Activated T-helper 1 cell treated with anti-CD3 and anti-CD28 coated beads, Interleukin-12 subunit alpha, Interleukin-12 subunit beta, Interleukin-2, Interleukin-4 antibody, amounts not matched to agents 30 ng/mL and 10 ng/mL and 1 ng/mL, durations not matched to agents 14 hours and 24 hours and 36 hours (primary cell): ENCODE measurements at regions of chr7 and their contacts with region 1.

Region 1: DNA sequence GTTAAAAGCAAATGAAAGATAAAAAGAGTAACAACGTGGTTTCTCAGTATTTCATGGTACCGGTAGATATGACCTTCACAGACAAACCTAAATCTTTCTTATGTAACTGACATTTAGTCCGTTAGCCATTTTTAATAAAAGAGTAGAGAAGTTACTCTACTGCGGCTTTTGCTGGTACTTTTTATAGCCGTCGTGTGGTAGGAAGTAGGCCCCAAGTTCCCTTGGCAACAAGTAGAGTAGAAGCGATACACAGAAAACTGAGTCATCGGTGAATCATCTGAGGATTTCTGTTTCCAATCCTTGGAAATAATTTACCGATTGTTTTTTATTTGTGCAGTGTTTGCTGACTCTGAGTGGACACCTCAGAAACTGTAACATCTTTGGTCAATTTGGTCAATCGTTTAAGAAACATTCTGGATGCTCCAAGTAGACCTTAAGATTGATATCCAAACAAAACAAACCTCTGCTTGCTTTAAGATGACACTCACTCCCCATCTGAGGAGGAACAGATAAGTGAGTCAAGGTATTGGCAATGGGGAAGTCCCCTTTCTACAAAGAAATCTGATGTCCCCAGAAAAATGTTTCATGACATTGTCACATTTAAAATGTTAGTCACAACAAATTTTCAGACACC is 63.9 kb upstream of the AHR start:
- DNase-seq: peak; percentile 68
- H3K4me3 Mint-ChIP-seq: peak overlapping the region; percentile 82
- H3K27ac Mint-ChIP-seq: peak overlapping the region; percentile 97
- H3K4me1 Mint-ChIP-seq: peaks cover 63% of the 10 kb centered on the region
- H3K27me3 Mint-ChIP-seq: peaks cover 5% of the 10 kb centered on the region

Region 2: DNA sequence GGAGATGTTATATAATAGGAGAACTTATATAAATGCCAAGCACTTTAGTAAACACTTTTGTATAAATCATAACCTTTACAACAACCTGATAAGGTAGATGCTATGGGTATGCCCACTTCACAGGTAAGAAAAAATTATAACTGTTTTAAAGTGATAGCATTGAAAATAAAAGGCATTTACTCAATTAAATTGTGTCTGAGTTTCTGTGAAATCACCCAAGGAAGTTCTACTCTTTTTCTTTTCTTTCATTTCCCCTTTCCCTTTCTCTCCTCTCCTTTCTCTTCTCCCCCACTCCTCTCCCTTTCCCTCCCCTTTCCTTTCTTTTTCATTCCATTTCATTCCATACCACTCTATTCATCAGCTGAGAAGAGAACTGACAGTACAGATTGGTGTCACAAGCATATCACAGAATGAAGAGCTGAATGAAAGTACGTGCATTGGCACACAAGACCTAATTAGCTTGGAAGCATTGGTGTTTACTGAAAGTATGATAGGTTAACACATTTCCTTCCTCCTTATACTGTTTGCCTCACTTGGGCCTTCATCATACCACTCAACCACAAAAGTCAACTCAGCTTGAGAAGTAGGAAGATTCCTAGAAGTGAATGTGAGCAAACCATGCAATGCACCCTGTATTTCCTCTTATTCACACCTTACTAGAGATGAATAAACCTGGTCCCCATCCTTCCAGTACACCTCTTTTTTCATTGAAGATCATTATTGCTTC is 234.8 kb before region 1 on chr7:
- intact Hi-C with region 1: loop called (anchors 1 kb)
- DNase-seq: peak; percentile 14
- H3K4me3 Mint-ChIP-seq: peak overlapping the region; percentile 62
- H3K27ac Mint-ChIP-seq: peak overlapping the region; percentile 77
- H3K4me1 Mint-ChIP-seq: peaks cover 17% of the 10 kb centered on the region
- H3K27me3 Mint-ChIP-seq: peaks cover 4% of the 10 kb centered on the region

Region 3: GRCh38 chr7:17139081-17139480 is 95.4 kb before region 1 on chr7:
- intact Hi-C with region 1: loop called (anchors 1 kb)
- DNase-seq: no peak
- H3K4me3 Mint-ChIP-seq: no peak overlapping the region
- H3K27ac Mint-ChIP-seq: peak overlapping the region; percentile 81
- H3K4me1 Mint-ChIP-seq: peaks cover 66% of the 10 kb centered on the region
- H3K27me3 Mint-ChIP-seq: no peaks in the 10 kb centered on the region

Region 4: GRCh38 chr7:17166824-17167379 is 67.6 kb before region 1 on chr7:
- intact Hi-C with region 1: loop called (anchors 1 kb)
- DNase-seq: no peak
- H3K4me3 Mint-ChIP-seq: no peak overlapping the region
- H3K27ac Mint-ChIP-seq: peak overlapping the region; percentile 6
- H3K4me1 Mint-ChIP-seq: peaks cover 34% of the 10 kb centered on the region
- H3K27me3 Mint-ChIP-seq: peaks cover 5% of the 10 kb centered on the region

Region 5: GRCh38 chr7:17298207-17298839 is 63.8 kb after region 1 on chr7 and contains the start of gene AHR:
- intact Hi-C with region 1: loop called (anchors 1 kb)
- DNase-seq: peak; percentile 62
- H3K4me3 Mint-ChIP-seq: peak within 1 kb of the TSS; percentile 92
- H3K27ac Mint-ChIP-seq: peak within 1 kb of the TSS; percentile 94
- H3K4me1 Mint-ChIP-seq: peaks cover 15% of the 10 kb centered on the region
- H3K27me3 Mint-ChIP-seq: no peaks in the 10 kb centered on the region
- total RNA-seq, gene AHR: 25.3 and 29.1 TPM in 2 replicates